ENCODE measurements at regions of chr7 and their contacts with region 1.

Region 1: DNA sequence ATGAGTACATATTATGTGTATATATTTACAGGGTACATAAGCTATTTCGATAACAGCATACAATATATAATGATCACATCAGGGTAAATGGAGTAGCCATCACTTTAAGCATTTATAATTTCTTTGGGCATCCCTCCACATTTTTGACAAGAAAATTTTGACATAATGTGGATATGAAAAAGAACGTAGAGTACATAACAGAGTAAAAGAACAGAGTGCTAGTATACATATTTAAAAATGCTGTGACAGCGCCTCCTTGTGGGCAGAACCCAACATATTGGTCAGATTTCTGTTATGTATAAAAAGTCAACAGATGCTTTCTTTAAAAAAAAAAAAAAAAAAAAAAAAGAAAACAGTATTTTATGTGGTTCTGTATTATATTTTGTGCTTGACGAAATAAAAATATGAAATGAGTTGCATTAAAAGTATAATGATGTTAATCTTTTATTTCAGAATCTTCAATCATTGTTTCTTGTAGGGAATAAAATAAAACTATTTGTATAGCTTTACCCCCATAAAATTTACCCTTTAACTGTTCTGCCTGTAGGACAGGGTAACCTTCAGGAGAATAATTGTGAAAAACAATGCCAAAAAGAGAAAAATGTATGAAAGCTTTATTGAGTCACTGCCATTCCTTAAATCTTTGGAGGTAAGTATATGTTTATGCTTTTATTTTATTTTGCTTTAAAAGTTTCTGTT is 18.3 kb upstream of the HBP1 start:
- DNase-seq: peak; percentile 91
- H3K4me3 Mint-ChIP-seq: no peak overlapping the region
- H3K27ac Mint-ChIP-seq: no peak overlapping the region
- H3K4me1 Mint-ChIP-seq: peaks cover 4% of the 10 kb centered on the region
- H3K27me3 Mint-ChIP-seq: no peaks in the 10 kb centered on the region

Region 2: GRCh38 chr7:106542550-106543220 is 607.8 kb before region 1 on chr7:
- CTCF ChIA-PET with region 1: interaction called, 3 read pairs
- intact Hi-C with region 1: loop called (anchors 10 kb)
- DNase-seq: peak; percentile 76
- H3K4me3 Mint-ChIP-seq: no peak overlapping the region
- H3K27ac Mint-ChIP-seq: no peak overlapping the region
- H3K4me1 Mint-ChIP-seq: peaks cover 8% of the 10 kb centered on the region
- H3K27me3 Mint-ChIP-seq: no peaks in the 10 kb centered on the region

Region 3: DNA sequence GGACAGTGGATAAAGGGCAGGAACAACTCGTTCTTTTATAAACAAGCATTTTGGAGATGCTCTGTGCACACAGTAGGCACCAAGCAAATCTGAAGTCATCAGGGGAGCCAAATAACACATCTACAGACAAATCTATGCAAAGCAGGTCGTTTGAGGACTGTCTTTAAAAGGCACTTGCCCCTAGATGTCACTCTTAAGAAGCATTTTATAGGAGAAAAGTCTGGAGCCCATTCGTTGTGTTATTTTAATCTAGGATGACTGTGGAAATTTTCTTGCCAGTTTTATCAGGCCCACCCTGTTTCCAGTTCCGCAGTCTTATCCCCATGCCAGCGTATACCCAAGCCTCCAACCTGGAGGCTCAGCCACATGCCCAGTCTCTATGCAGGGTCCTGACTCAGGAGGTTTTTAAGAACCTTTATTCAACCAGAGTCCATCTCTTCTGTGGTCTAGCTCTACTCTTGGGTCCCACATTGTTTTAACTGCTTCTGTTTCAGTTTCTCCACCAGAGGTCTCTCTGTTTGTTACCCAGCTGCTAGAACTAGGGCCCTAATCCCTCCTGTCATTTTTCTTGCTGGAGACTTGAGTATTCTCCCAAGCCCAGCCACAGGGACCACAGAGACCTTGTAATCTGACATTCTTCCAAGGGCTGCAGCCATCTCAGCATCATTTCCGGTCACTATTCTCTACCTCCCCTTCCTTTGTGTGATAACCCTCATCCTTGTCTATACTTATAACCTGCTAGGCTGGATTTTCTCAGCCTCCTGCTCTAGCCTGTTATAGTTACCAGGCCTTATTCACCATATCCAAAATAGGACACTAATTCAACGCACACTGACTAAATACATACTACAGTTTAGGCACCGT is 258.7 kb before region 1 on chr7:
- CTCF ChIA-PET with region 1: interaction called, 3 read pairs
- intact Hi-C with region 1: loop called (anchors 5 kb)
- DNase-seq: no peak
- H3K4me3 Mint-ChIP-seq: no peak overlapping the region
- H3K27ac Mint-ChIP-seq: no peak overlapping the region
- H3K4me1 Mint-ChIP-seq: peaks cover 8% of the 10 kb centered on the region
- H3K27me3 Mint-ChIP-seq: no peaks in the 10 kb centered on the region

Region 4: DNA sequence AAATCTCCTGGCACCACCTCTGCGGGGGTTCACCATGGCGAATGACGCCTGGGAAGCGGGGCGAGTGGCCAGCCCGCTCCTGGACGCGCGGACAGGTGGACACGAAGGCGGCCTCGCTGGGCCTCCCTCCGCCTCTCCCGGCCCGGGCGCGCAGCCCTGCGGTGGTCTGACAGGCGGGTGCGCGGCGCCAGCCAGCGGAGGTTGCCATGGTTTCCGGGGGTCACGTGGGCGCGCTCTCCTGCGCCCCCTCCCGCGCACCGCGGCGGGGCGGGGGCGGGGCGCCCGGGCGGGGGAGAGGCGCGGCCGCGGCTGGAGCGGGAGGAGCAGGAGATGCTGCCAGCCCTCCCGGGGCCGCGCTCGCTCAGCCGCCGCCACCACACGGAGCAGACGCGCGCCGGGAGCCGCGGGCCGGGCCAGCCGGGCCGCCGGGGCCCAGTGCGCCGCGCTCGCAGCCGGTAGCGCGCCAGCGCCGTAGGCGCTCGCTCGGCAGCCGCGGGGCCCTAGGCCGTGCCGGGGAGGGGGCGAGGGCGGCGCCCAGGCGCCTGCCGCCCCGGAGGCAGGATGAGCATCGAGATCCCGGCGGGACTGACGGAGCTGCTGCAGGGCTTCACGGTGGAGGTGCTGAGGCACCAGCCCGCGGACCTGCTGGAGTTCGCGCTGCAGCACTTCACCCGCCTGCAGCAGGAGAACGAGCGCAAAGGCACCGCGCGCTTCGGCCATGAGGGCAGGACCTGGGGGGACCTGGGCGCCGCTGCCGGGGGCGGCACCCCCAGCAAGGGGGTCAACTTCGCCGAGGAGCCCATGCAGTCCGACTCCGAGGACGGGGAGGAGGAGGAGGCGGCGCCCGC is 106.0 kb before region 1 on chr7 and contains the start of gene PRKAR2B:
- CTCF ChIA-PET with region 1: interaction called, 3 read pairs
- intact Hi-C with region 1: loop called (anchors 5 kb)
- DNase-seq: peak; percentile 66
- H3K4me3 Mint-ChIP-seq: peak within 1 kb of the TSS; percentile 82
- H3K27ac Mint-ChIP-seq: no peak within 1 kb of the TSS
- H3K4me1 Mint-ChIP-seq: peaks cover 9% of the 10 kb centered on the region
- H3K27me3 Mint-ChIP-seq: peaks cover 36% of the 10 kb centered on the region
- total RNA-seq, gene PRKAR2B: 1.5 TPM

Region 5: GRCh38 chr7:107130487-107131225 is 19.9 kb before region 1 on chr7:
- CTCF ChIA-PET with region 1: interaction called, 28 read pairs
- intact Hi-C with region 1: no loop called
- DNase-seq: no peak
- H3K4me3 Mint-ChIP-seq: no peak overlapping the region
- H3K27ac Mint-ChIP-seq: no peak overlapping the region
- H3K4me1 Mint-ChIP-seq: peaks cover 10% of the 10 kb centered on the region
- H3K27me3 Mint-ChIP-seq: no peaks in the 10 kb centered on the region

Region 6: DNA sequence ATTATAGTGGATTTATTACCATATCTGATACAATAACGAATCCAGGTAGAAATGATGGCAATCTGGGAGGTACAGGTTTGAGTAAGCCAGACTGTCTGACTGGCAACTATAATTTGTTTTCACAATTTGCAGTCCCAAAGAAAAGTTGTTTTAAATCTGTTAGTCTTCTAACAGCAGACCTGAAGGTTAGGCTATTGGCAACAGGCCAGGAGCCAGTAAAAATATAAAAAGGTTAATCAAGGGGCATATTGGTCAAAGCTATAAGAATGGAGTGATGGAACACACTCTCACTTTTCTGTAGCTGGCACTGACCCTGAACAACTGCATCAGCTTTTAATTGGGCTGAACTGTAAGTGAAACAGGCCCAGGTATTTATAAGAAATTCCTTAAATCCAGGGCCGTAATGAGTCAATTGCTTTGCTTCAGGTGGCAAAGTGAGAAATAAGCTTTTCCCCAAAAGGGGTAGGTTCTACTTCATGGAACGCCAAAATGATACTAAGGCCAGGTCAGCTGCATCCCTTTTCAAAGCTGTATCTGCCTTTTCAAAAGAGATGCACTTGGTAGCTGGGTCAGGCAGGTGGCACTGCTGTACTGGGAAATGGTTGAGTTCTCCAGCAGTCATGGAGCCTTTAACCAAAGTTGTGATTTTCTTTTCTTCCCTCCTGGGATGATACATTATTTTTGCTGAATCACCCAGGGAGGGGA is 312.4 kb after region 1 on chr7:
- CTCF ChIA-PET with region 1: no interaction called
- intact Hi-C with region 1: loop called (anchors 2 kb)
- DNase-seq: peak; percentile 64
- H3K4me3 Mint-ChIP-seq: no peak overlapping the region
- H3K27ac Mint-ChIP-seq: no peak overlapping the region
- H3K4me1 Mint-ChIP-seq: no peaks in the 10 kb centered on the region
- H3K27me3 Mint-ChIP-seq: no peaks in the 10 kb centered on the region

Region 7: GRCh38 chr7:107725151-107725740 is 574.7 kb after region 1 on chr7:
- CTCF ChIA-PET with region 1: interaction called, 3 read pairs
- intact Hi-C with region 1: loop called (anchors 1 kb)
- DNase-seq: peak; percentile 75
- H3K4me3 Mint-ChIP-seq: no peak overlapping the region
- H3K27ac Mint-ChIP-seq: no peak overlapping the region
- H3K4me1 Mint-ChIP-seq: no peaks in the 10 kb centered on the region
- H3K27me3 Mint-ChIP-seq: peaks cover 26% of the 10 kb centered on the region